Calu3 (cell line): ENCODE measurements at regions of chr9 and their contacts with region 1.

Region 1: GRCh38 chr9:19456996-19457692 is 48.3 kb downstream of the ACER2 start:
- DNase-seq: peak; percentile 65
- H3K4me3 Mint-ChIP-seq: peak overlapping the region; percentile 55
- H3K27ac Mint-ChIP-seq: no peak overlapping the region
- H3K4me1 Mint-ChIP-seq: no peaks in the 10 kb centered on the region
- H3K27me3 Mint-ChIP-seq: no peaks in the 10 kb centered on the region
- CTCF ChIP-seq: peak; percentile 84

Region 2: GRCh38 chr9:19048966-19049916 is 407.9 kb before region 1 on chr9 and contains the start of gene RRAGA:
- CTCF ChIA-PET with region 1: interaction called, 4 read pairs
- intact Hi-C with region 1: loop called (anchors 10 kb)
- DNase-seq: peak; percentile 92
- H3K4me3 Mint-ChIP-seq: peak within 1 kb of the TSS; percentile 80
- H3K27ac Mint-ChIP-seq: peak within 1 kb of the TSS; percentile 89
- H3K4me1 Mint-ChIP-seq: peaks cover 12% of the 10 kb centered on the region
- H3K27me3 Mint-ChIP-seq: no peaks in the 10 kb centered on the region
- CTCF ChIP-seq: peak; percentile 70
- total RNA-seq, gene RRAGA: 39.7 and 40.6 TPM in 2 replicates

Region 3: DNA sequence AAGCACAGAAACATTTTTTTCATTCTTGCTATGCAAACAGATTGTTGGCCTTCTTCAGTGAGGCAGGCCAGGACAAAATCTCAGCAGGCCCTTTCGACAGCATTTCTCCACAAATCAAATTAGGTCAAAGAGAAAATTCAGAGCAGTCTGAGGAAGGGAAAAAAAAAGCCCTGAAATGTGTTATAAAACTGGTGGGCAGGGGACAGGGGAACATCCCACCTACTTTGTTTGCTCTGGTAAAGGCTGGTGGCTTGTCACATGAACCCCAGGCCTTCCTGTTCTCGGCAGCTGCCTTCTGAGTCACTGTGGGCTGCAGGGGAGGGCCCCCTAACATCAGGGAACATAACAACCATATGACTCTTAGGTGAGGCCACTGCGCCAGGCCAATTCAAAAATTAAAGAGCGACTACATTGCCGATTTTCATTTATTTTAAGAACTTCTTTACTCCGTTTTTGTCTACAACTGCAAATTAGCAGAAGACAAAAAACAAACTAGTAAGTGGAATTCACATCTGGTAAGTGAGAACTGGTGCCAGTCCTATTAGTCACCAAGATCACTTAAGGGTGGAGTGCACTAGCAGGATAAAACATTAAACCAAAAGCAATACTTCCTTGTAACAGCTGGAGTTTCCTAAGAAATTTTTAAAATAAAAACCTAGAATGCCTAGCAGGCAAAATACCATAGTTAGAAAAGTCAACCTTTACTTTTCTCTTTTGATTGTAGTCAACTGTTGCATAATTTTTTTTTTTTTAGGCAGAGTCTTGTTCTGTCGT is 272.8 kb before region 1 on chr9:
- CTCF ChIA-PET with region 1: no interaction called
- intact Hi-C with region 1: loop called (anchors 10 kb)
- DNase-seq: peak; percentile 63
- H3K4me3 Mint-ChIP-seq: peak overlapping the region; percentile 21
- H3K27ac Mint-ChIP-seq: peak overlapping the region; percentile 86
- H3K4me1 Mint-ChIP-seq: no peaks in the 10 kb centered on the region
- H3K27me3 Mint-ChIP-seq: no peaks in the 10 kb centered on the region
- CTCF ChIP-seq: no peak

Region 4: DNA sequence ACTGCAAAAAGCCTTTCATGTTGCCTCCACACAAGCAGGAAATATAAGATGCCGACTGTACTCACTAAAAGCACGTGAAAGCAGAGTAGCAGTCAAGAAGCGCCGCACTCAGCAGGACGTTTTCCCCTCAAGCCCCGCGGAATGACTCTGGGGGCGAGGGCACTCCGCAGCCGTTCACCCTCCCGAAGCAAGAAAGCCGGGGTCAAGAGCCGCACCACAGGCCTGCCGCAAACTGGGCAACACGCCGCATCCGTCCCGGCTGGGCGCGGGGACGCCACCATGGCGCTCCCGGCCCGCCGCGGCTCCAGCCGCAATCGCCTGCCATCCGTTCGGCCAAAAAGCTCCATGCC is 77.5 kb before region 1 on chr9:
- CTCF ChIA-PET with region 1: interaction called, 3 read pairs
- intact Hi-C with region 1: loop called (anchors 2 kb)
- DNase-seq: no peak
- H3K4me3 Mint-ChIP-seq: peak overlapping the region; percentile 95
- H3K27ac Mint-ChIP-seq: peak overlapping the region; percentile 99
- H3K4me1 Mint-ChIP-seq: peaks cover 25% of the 10 kb centered on the region
- H3K27me3 Mint-ChIP-seq: no peaks in the 10 kb centered on the region
- CTCF ChIP-seq: no peak